ENCODE measurements at regions of chr19 and their contacts with region 1.

Region 1: GRCh38 chr19:49097455-49098288 is 12.4 kb downstream of the SNRNP70 start:
- DNase-seq: peak; percentile 85
- H3K4me3 Mint-ChIP-seq: no peak overlapping the region
- H3K27ac Mint-ChIP-seq: no peak overlapping the region
- H3K4me1 Mint-ChIP-seq: peaks cover 7% of the 10 kb centered on the region
- H3K27me3 Mint-ChIP-seq: no peaks in the 10 kb centered on the region
- CTCF ChIP-seq: peak; percentile 99

Region 2: GRCh38 chr19:48868114-48868886 is 229.4 kb before region 1 on chr19 and contains the start of gene PLEKHA4:
- CTCF ChIA-PET with region 1: no interaction called
- intact Hi-C with region 1: no loop called
- DNase-seq: peak; percentile 66
- H3K4me3 Mint-ChIP-seq: peak within 1 kb of the TSS; percentile 76
- H3K27ac Mint-ChIP-seq: peak within 1 kb of the TSS; percentile 88
- H3K4me1 Mint-ChIP-seq: peaks cover 30% of the 10 kb centered on the region
- H3K27me3 Mint-ChIP-seq: peaks cover 8% of the 10 kb centered on the region
- CTCF ChIP-seq: no peak
- total RNA-seq, gene PLEKHA4: 57.6 and 72.2 TPM in 2 replicates

Region 3: DNA sequence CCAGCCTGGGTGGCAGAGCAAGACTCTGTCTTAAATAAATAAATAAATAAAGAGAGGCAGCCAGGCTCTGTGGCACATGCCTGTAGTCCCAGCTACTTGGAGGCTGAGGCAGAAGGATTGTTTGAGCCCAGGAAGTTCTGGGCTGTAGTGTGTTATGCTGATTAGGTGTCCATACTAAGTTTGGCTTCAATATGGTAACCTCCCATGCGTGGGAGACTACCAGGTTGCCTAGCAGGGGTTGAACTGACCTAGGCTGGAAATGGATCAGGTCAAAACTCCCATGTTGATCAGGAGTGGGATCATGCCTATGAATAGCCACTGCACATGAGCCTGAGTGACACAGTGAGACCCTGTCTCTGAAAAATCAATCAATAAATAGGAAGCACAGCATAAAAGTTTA is 16.4 kb before region 1 on chr19:
- CTCF ChIA-PET with region 1: no interaction called
- intact Hi-C with region 1: no loop called
- DNase-seq: no peak
- H3K4me3 Mint-ChIP-seq: no peak overlapping the region
- H3K27ac Mint-ChIP-seq: no peak overlapping the region
- H3K4me1 Mint-ChIP-seq: peaks cover 13% of the 10 kb centered on the region
- H3K27me3 Mint-ChIP-seq: no peaks in the 10 kb centered on the region
- CTCF ChIP-seq: no peak

Region 4: DNA sequence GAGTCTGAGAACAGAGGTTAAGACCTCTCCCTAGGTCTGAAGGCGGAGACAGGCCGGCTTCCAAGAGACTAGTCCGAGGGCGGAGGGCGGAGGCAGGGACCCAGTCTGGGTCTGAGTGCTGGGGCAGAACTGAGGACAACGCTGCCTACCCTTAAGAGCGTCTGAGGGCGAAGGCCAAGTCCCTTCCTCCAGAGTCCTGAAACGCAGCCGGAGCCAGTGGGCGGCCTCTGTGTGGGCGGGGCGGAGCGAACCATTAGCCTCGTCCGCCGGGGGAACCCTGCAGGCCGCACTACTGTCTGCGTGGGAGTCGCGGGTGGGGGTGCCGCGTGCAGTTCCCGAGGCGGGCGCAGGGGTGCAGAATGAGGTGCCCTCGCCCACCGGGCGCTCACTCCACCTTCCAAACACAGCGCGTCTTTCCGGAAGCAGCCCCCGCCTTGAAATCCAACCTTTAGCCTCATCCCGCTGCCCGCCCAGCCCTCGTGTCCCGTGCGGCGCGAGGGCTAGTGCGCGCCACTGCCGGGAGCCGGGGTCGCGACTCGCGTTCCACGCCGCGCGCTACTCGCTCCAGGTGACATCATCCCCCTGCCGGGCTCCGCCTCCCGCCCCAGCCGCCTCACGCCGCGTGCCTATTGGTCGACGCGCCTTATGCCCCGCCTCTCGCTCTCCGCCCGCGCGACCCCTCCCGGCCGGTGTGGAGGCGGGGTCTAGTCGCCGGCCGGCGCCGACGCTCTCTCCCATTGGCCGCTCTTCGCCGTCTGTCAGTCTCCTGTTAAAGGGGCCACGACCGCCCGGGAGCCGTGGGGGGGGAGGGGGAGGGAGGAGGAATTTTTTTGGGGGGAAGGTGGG is 21.1 kb after region 1 on chr19 and contains the start of gene C19orf73:
- CTCF ChIA-PET with region 1: interaction called, 27 read pairs
- intact Hi-C with region 1: no loop called
- DNase-seq: peak; percentile 98
- H3K4me3 Mint-ChIP-seq: peak within 1 kb of the TSS; percentile 93
- H3K27ac Mint-ChIP-seq: peak within 1 kb of the TSS; percentile 56
- H3K4me1 Mint-ChIP-seq: peaks cover 35% of the 10 kb centered on the region
- H3K27me3 Mint-ChIP-seq: peaks cover 37% of the 10 kb centered on the region
- CTCF ChIP-seq: peak; percentile 32
- total RNA-seq, gene C19orf73: 1.9 and 2.0 TPM in 2 replicates

Region 5: DNA sequence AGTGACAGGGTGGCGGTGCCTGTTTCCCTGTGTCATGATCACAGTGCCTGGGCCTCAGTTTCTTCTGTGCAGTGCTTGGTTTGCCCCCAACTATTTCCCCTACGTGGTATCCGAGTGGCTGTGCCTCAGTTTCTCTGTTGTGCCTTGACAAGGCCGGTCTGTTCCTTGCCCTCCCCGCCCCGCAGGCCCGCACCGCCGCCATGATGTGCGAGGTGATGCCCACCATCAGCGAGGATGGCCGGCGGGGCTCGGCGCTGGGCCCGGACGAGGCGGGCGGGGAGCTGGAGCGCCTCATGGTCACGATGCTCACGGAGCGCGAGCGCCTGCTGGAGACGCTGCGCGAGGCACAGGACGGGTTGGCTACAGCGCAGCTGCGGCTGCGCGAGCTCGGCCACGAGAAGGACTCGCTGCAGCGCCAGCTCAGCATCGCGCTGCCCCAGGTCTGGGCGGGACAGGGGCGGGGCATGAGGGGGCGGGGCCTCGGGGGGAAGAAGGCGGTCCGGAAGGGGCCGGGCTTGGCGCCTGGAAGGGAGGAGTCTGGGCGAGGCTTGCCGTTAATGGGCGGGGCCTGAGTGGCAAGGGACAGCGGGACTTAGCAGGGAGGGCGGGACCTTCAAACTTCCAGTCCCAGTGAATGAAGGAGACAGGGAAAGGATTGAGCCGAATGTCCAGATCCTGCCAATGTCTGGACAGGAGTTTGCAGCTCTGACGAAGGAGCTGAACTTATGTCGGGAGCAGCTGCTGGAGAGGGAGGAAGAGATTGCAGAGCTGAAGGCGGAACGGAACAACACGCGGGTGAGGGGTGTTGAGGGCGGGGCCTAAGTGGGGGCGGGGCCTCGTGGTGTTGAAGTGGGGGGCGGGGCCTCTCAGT is 30.2 kb after region 1 on chr19:
- CTCF ChIA-PET with region 1: interaction called, 13 read pairs
- intact Hi-C with region 1: no loop called
- DNase-seq: peak; percentile 99
- H3K4me3 Mint-ChIP-seq: peak overlapping the region; percentile 60
- H3K27ac Mint-ChIP-seq: peak overlapping the region; percentile 55
- H3K4me1 Mint-ChIP-seq: peaks cover 13% of the 10 kb centered on the region
- H3K27me3 Mint-ChIP-seq: peaks cover under 1% of the 10 kb centered on the region
- CTCF ChIP-seq: peak; percentile 24

Region 6: GRCh38 chr19:49210108-49210900 is 112.6 kb after region 1 on chr19:
- CTCF ChIA-PET with region 1: interaction called, 35 read pairs
- intact Hi-C with region 1: loop called (anchors 5 kb)
- DNase-seq: peak; percentile 34
- H3K4me3 Mint-ChIP-seq: no peak overlapping the region
- H3K27ac Mint-ChIP-seq: no peak overlapping the region
- H3K4me1 Mint-ChIP-seq: peaks cover 12% of the 10 kb centered on the region
- H3K27me3 Mint-ChIP-seq: no peaks in the 10 kb centered on the region
- CTCF ChIP-seq: no peak

Region 7: GRCh38 chr19:49224856-49225255 is 127.2 kb after region 1 on chr19:
- CTCF ChIA-PET with region 1: interaction called, 18 read pairs
- intact Hi-C with region 1: no loop called
- DNase-seq: peak; percentile 86
- H3K4me3 Mint-ChIP-seq: no peak overlapping the region
- H3K27ac Mint-ChIP-seq: no peak overlapping the region
- H3K4me1 Mint-ChIP-seq: peaks cover 9% of the 10 kb centered on the region
- H3K27me3 Mint-ChIP-seq: no peaks in the 10 kb centered on the region
- CTCF ChIP-seq: peak; percentile 73